Aorta (tissue), 5 donors: ENCODE measurements at regions of chr15 and their contacts with region 1.

Region 1: DNA sequence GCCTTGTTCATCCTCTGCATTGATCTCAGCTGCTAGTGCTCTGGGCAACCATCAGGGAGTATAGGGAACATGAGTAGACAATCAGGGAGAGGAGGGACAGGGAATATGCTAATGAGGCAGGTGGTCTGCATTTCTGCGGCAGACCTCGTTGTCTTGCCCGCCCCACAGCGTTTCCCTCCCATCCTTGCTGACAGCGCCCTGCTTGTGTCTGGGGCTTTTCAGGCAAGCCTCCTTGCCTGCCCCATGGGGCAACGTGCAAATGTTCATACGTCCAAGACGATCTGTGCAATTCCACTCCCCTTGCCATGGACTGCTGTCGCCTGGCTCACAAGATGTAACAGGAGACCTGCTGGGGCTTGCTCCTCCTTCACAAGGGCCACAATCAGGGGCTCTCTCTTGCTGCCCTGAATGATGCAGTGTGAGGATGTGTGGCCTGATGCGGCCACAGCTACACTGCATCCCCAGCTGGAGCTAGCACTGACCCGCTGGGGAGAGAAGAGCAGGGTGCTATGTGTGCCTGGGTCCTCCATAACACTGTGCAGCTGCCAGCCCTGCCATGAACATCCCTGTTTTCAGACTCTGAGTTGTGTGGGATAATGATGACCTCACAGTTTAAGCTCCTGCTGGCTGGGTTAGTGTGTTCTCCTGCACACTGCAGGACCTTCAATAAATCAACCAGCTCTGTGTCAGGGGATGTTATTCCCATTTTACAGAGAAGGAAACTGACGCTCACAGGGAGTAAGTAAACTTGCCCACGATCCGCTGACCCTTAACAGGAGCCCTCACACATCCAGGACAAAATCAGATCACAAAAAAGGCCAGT is 211.3 kb downstream of the KLF13 start:
- DNase-seq: no peak
- ATAC-seq: no peak
- H3K4me3 ChIP-seq: no peak overlapping the region
- H3K27ac ChIP-seq: no peak overlapping the region
- H3K4me1 ChIP-seq: no peaks in the 10 kb centered on the region
- H3K27me3 ChIP-seq: no peaks in the 10 kb centered on the region

Region 2: DNA sequence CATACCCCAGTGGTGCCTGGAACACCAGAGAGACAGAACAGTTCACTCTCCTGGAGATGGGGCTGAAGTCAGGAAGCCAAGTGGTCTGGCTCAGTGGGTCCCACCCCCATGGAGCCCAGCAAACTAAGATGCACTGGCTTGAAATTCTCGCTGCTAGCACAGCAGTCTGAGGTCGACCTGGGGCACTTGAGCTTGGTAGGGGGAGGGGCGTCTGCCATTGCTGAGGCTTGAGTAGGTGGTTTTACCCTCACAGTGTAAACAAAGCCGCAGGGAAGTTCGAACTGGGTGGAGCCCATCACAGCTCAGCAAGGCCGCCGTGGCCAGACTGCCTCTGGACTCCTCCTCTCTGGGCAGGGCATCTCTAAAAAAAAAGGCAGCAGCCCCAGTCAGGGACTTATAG is 60.6 kb after region 1 on chr15:
- intact Hi-C with region 1: loop called in 1 of 2 experiments (anchors 10 kb)
- DNase-seq: no peak
- ATAC-seq: no peak
- H3K4me3 ChIP-seq: no peak overlapping the region
- H3K27ac ChIP-seq: no peak overlapping the region
- H3K4me1 ChIP-seq: no peaks in the 10 kb centered on the region
- H3K27me3 ChIP-seq: no peaks in the 10 kb centered on the region